Right ventricle myocardium superior (tissue), 1 donor: ENCODE measurements at regions of chr15 and their contacts with region 1.

Region 1: DNA sequence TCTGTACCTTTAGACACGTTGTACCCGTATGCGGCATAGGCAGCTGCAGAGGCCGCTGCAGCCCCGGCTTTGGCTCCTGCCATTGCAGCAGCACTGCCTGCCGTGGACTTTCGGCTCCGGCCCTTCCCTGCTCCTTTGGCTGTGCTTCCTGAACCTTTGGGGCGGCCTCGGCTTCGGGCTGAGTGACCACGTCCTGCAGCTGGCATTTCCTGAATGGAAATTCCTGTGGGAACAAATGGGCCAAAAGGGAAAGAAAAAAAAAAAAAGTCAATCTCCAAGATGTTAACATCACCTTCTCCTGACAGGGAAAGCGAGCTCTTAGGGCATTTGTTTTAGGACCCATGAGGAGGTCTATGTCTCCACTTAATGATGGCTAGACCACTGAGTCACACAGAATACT is 29.6 kb downstream of the CHAC1 start:
- DNase-seq: no peak
- ATAC-seq: no peak

Region 2: DNA sequence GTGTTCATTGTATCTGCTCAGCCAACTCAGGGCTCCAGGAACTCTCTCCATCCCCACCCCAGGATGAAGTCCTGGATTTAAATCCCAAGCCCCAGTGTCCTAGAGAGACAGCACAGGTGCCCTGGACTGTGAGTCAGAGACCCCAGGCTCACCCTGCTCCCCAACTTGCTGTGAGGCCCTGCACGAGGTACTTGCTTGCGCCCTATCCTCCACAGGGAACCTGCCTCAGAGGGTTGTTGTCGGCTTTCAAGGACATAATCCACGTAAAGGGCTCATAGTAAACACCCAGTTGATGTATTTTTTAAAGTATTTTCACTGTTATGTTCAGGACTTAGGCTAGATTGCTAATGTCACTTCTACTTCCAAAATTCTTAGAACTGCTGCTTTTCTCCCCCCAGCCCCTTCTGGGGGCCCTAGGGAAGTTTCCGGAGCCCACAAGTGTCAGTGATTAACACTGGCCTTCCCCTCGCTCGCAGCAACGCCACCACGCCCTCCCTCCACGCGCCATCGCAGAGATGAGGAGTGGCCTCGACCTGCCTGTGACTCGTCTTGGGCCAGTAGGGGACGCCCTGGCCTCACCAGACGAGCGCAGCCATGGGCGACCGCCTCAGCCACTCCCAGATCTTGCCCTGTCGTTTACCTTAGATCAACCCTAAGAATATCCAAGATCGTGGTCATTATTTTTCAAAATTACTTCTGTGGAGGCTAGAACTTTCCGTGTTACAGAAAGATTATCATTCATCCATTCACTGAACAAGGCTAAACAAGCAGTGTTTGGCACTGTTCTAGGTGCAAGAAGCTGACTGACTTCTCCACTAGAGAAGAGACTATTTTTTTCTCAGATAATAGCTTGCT is 937.9 kb before region 1 on chr15:
- intact Hi-C with region 1: no loop called
- DNase-seq: peak; percentile 94
- ATAC-seq: peak; percentile 93

Region 3: GRCh38 chr15:40578892-40579291 is 404.0 kb before region 1 on chr15:
- intact Hi-C with region 1: no loop called
- DNase-seq: no peak
- ATAC-seq: no peak

Region 4: GRCh38 chr15:40949756-40950207 is 33.1 kb before region 1 on chr15:
- intact Hi-C with region 1: loop called (anchors 5 kb)
- DNase-seq: no peak
- ATAC-seq: no peak

Region 5: GRCh38 chr15:41031232-41032078 is 48.6 kb after region 1 on chr15:
- intact Hi-C with region 1: no loop called
- DNase-seq: no peak
- ATAC-seq: no peak

Region 6: GRCh38 chr15:41096178-41096577 is 113.3 kb after region 1 on chr15:
- intact Hi-C with region 1: no loop called
- DNase-seq: no peak
- ATAC-seq: no peak